ENCODE measurements at regions of chr6 and their contacts with region 1.

Region 1: GRCh38 chr6:17584241-17584803 is 15.8 kb upstream of the FAM8A1 start:
- DNase-seq: peak; percentile 66
- ATAC-seq: peak; percentile 72
- H3K4me3 ChIP-seq: no peak overlapping the region
- H3K27ac ChIP-seq: no peak overlapping the region
- H3K4me1 ChIP-seq: peaks cover 4 to 12% of the 10 kb centered on the region in 2 experiments; a peak in 3 of 4 replicates
- H3K27me3 ChIP-seq: no peaks in the 10 kb centered on the region
- CTCF ChIP-seq: peak; percentile 57 to 99 (median 75)
- POLR2A ChIP-seq: no peak
- RAD21 ChIP-seq: peak; percentile 91

Region 2: GRCh38 chr6:17156112-17156921 is 428.0 kb before region 1 on chr6:
- CTCF ChIA-PET with region 1: interaction called, 18 read pairs
- POLR2A ChIA-PET with region 1: no interaction called
- RAD21 ChIA-PET with region 1: interaction called in 1 of 2 experiments, 4 read pairs
- intact Hi-C with region 1: loop called (anchors 1 kb)
- DNase-seq: peak; percentile 80
- ATAC-seq: peak; percentile 81
- H3K4me3 ChIP-seq: no peak overlapping the region
- H3K27ac ChIP-seq: no peak overlapping the region
- H3K4me1 ChIP-seq: no peaks in the 10 kb centered on the region
- H3K27me3 ChIP-seq: no peaks in the 10 kb centered on the region
- CTCF ChIP-seq: peak; percentile 70 to 92 (median 86)
- POLR2A ChIP-seq: no peak
- RAD21 ChIP-seq: peak; percentile 94

Region 3: GRCh38 chr6:17167327-17167979 is 416.9 kb before region 1 on chr6:
- CTCF ChIA-PET with region 1: interaction called, 11 read pairs
- POLR2A ChIA-PET with region 1: no interaction called
- RAD21 ChIA-PET with region 1: no interaction called
- intact Hi-C with region 1: no loop called
- DNase-seq: peak; percentile 84
- ATAC-seq: peak; percentile 100
- H3K4me3 ChIP-seq: peak overlapping the region; percentile 15 to 50
- H3K27ac ChIP-seq: no peak overlapping the region
- H3K4me1 ChIP-seq: peaks cover 0 to 9% of the 10 kb centered on the region in 2 experiments; a peak in 2 of 4 replicates
- H3K27me3 ChIP-seq: no peaks in the 10 kb centered on the region
- CTCF ChIP-seq: peak; percentile 67 to 76 (median 73); a peak in 5 of 6 replicates
- POLR2A ChIP-seq: no peak
- RAD21 ChIP-seq: peak; percentile 64

Region 4: GRCh38 chr6:17278289-17279061 is 305.8 kb before region 1 on chr6:
- CTCF ChIA-PET with region 1: interaction called, 3 read pairs
- POLR2A ChIA-PET with region 1: no interaction called
- RAD21 ChIA-PET with region 1: no interaction called
- intact Hi-C with region 1: loop called (anchors 10 kb)
- DNase-seq: no peak
- ATAC-seq: peak; percentile 55
- H3K4me3 ChIP-seq: peak overlapping the region; percentile 29 to 49
- H3K27ac ChIP-seq: peak overlapping the region; percentile 49
- H3K4me1 ChIP-seq: peaks cover 13 to 48% of the 10 kb centered on the region in 2 experiments
- H3K27me3 ChIP-seq: no peaks in the 10 kb centered on the region
- CTCF ChIP-seq: no peak
- POLR2A ChIP-seq: no peak
- RAD21 ChIP-seq: no peak

Region 5: DNA sequence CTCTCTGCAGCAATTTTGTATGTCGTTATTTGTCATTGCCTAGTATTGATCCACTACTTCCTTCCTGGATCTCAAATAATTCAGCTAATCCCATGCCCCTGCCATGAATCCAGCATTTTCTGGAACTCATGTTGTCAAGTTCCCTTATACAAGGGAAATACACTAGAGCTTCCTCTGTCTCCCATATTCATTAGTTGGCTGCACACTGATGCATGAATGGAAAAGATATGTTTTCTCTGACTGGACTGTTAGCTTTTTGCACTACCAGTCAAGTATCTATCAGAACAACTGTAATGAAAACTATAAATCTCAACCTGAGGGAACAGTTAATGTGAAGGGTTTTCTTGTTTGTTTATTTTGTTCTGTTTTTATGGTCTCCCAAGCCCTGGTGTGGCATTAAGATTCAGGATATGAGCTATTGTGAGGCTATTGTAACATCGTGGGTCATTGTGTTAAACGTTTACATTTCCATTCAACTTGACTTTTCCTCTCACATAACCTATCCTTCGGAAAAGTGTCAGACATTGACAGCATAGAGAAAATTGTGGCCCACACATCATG is 86.7 kb before region 1 on chr6:
- CTCF ChIA-PET with region 1: no interaction called
- POLR2A ChIA-PET with region 1: no interaction called
- RAD21 ChIA-PET with region 1: no interaction called
- intact Hi-C with region 1: no loop called
- DNase-seq: no peak
- ATAC-seq: no peak
- H3K4me3 ChIP-seq: no peak overlapping the region
- H3K27ac ChIP-seq: no peak overlapping the region
- H3K4me1 ChIP-seq: peaks cover 0 to 5% of the 10 kb centered on the region in 2 experiments; a peak in 2 of 4 replicates
- H3K27me3 ChIP-seq: no peaks in the 10 kb centered on the region
- CTCF ChIP-seq: no peak
- POLR2A ChIP-seq: no peak
- RAD21 ChIP-seq: no peak

Region 6: GRCh38 chr6:17808609-17809008 is 224.3 kb after region 1 on chr6:
- CTCF ChIA-PET with region 1: interaction called, 12 read pairs
- POLR2A ChIA-PET with region 1: no interaction called
- RAD21 ChIA-PET with region 1: no interaction called
- intact Hi-C with region 1: loop called (anchors 2 kb)
- DNase-seq: no peak
- ATAC-seq: no peak
- H3K4me3 ChIP-seq: no peak overlapping the region
- H3K27ac ChIP-seq: no peak overlapping the region
- H3K4me1 ChIP-seq: no peaks in the 10 kb centered on the region
- H3K27me3 ChIP-seq: no peaks in the 10 kb centered on the region
- CTCF ChIP-seq: no peak
- POLR2A ChIP-seq: no peak
- RAD21 ChIP-seq: no peak

Region 7: GRCh38 chr6:17820055-17820454 is 235.7 kb after region 1 on chr6:
- CTCF ChIA-PET with region 1: interaction called, 10 read pairs
- POLR2A ChIA-PET with region 1: no interaction called
- RAD21 ChIA-PET with region 1: interaction called in 1 of 2 experiments, 3 read pairs
- intact Hi-C with region 1: loop called (anchors 2 kb)
- DNase-seq: no peak
- ATAC-seq: peak; percentile 44; the same call in 1 of the 2 replicates
- H3K4me3 ChIP-seq: no peak overlapping the region
- H3K27ac ChIP-seq: no peak overlapping the region
- H3K4me1 ChIP-seq: peaks cover 4 to 5% of the 10 kb centered on the region in 2 experiments; a peak in 2 of 4 replicates
- H3K27me3 ChIP-seq: no peaks in the 10 kb centered on the region
- CTCF ChIP-seq: 0 out of 6 replicates have a peak, but pooled peaks of 2 of the 3 experiments have one; percentile 5 to 9
- POLR2A ChIP-seq: no peak
- RAD21 ChIP-seq: no peak

Region 8: GRCh38 chr6:18503593-18504231 is 919.4 kb after region 1 on chr6:
- CTCF ChIA-PET with region 1: no interaction called
- POLR2A ChIA-PET with region 1: no interaction called
- RAD21 ChIA-PET with region 1: no interaction called
- intact Hi-C with region 1: loop called (anchors 5 kb)
- DNase-seq: peak; percentile 61
- ATAC-seq: peak; percentile 94
- H3K4me3 ChIP-seq: no peak overlapping the region
- H3K27ac ChIP-seq: no peak overlapping the region
- H3K4me1 ChIP-seq: no peaks in the 10 kb centered on the region; a peak in 1 of 4 replicates
- H3K27me3 ChIP-seq: no peaks in the 10 kb centered on the region
- CTCF ChIP-seq: peak; percentile 88 to 92 (median 91)
- POLR2A ChIP-seq: no peak
- RAD21 ChIP-seq: peak; percentile 99

Measured in HCT116 (cell line).